Calu3 (cell line): ENCODE measurements at regions of chr2 and their contacts with region 1.

Region 1: DNA sequence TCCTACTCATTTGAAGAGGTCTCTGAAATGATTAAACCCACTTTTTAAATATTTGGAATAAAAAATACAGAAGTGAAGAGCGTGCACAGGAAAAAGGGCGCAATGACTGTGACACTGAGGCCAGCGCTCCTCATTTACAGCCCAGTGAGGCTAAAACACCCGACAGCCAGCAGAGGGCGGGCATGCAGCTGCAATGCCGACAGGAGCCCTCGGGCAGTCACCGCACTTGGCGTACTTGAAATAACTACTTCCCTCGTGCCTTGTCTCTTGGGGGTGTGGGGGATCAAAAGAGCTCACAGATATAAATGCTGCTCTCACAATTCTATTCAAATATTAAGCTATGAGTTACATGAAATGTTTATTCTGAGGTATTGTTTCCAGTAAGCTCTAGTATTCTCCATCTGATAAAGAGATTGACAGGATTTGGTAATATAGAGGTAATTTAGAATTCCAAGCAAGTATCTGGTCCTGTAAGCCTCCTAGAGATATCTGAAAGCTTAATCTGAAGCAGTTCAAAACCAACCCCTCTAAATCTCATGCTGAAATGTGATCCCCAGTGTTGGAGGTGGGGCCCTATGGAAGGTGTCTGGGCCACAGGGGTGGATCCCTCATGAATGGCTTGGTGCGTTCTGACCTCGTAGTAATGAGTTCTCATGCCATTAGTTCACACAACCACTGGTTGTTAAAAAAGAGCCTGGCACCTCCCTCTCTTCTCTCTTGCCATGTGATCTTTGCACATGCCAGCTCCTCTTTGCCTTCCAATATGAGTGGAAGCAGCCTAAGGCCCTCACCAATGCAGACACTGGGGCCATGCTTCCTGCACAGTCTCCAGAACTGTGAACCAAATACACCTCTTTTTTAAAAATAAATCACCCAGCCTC is 93.6 kb downstream of the ZAP70 start:
- DNase-seq: peak; percentile 80
- H3K4me3 Mint-ChIP-seq: no peak overlapping the region
- H3K27ac Mint-ChIP-seq: no peak overlapping the region
- H3K4me1 Mint-ChIP-seq: no peaks in the 10 kb centered on the region
- H3K27me3 Mint-ChIP-seq: no peaks in the 10 kb centered on the region
- CTCF ChIP-seq: peak; percentile 81

Region 2: GRCh38 chr2:97948926-97949325 is 141.9 kb after region 1 on chr2:
- CTCF ChIA-PET with region 1: interaction called, 3 read pairs
- intact Hi-C with region 1: loop called (anchors 5 kb)
- DNase-seq: no peak
- H3K4me3 Mint-ChIP-seq: no peak overlapping the region
- H3K27ac Mint-ChIP-seq: no peak overlapping the region
- H3K4me1 Mint-ChIP-seq: peaks cover 18% of the 10 kb centered on the region
- H3K27me3 Mint-ChIP-seq: no peaks in the 10 kb centered on the region
- CTCF ChIP-seq: no peak

Region 3: GRCh38 chr2:97992836-97993825 is 186.2 kb after region 1 on chr2:
- CTCF ChIA-PET with region 1: no interaction called
- intact Hi-C with region 1: loop called (anchors 2 kb)
- DNase-seq: no peak
- H3K4me3 Mint-ChIP-seq: peak overlapping the region; percentile 80
- H3K27ac Mint-ChIP-seq: no peak overlapping the region
- H3K4me1 Mint-ChIP-seq: peaks cover 21% of the 10 kb centered on the region
- H3K27me3 Mint-ChIP-seq: no peaks in the 10 kb centered on the region
- CTCF ChIP-seq: no peak

Region 4: GRCh38 chr2:98157557-98157956 is 350.6 kb after region 1 on chr2:
- CTCF ChIA-PET with region 1: no interaction called
- intact Hi-C with region 1: loop called (anchors 10 kb)
- DNase-seq: peak; percentile 30
- H3K4me3 Mint-ChIP-seq: no peak overlapping the region
- H3K27ac Mint-ChIP-seq: no peak overlapping the region
- H3K4me1 Mint-ChIP-seq: no peaks in the 10 kb centered on the region
- H3K27me3 Mint-ChIP-seq: peaks cover 44% of the 10 kb centered on the region
- CTCF ChIP-seq: no peak

Region 5: DNA sequence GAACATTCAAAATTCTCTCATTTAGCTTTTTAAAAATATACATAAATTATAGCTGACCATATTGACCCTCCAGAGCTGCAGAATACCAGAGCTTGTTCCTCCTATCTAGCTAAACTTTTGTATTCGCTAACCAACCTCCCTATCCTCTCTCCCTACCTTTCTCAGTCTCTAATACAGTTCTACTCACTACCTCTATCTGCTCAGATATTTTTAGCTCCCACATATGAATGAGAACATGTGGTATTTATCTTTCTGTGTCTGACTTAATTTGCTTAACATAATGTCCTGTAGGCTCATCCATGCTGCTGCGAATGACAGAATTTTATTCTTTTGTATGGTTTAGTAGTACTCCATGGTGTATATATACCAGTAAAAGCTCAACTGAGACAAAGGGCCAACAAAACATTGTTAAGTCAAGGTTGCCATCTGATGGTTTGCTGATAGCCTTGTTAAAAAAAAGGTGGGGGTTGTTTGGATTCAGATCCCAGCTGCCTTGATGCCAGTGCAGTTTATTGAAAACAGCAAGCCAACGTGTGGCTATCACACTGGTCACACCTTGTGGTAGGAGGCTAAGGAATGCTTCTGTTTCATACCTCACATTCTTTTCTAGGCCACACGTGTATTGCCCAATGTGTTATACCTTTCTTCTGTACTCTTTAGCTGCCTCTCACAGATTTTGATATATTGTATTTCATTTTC is 381.5 kb after region 1 on chr2:
- CTCF ChIA-PET with region 1: interaction called, 6 read pairs
- intact Hi-C with region 1: loop called (anchors 2 kb)
- DNase-seq: peak; percentile 39
- H3K4me3 Mint-ChIP-seq: no peak overlapping the region
- H3K27ac Mint-ChIP-seq: no peak overlapping the region
- H3K4me1 Mint-ChIP-seq: no peaks in the 10 kb centered on the region
- H3K27me3 Mint-ChIP-seq: no peaks in the 10 kb centered on the region
- CTCF ChIP-seq: no peak

Region 6: DNA sequence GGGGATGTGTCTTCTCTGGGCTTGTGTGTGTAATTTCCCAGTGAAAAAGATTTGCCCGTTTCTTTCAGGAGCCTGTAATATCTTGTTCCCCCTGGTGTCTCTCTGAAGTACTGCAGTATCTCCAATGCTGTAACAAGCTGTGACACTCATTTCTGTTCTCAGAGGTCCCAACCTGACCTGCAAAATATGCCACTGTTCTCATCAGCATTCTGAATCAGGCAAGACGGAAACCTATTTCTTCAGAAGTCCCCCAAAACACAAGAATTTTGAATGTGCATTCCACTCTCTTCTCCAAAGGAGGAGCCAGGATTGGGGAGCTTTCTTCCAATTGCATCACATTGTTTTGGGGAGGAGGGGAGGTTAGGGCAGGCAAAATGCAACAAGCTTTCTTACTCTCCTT is 462.3 kb after region 1 on chr2:
- CTCF ChIA-PET with region 1: interaction called, 3 read pairs
- intact Hi-C with region 1: loop called (anchors 2 kb)
- DNase-seq: peak; percentile 60
- H3K4me3 Mint-ChIP-seq: no peak overlapping the region
- H3K27ac Mint-ChIP-seq: peak overlapping the region; percentile 22
- H3K4me1 Mint-ChIP-seq: peaks cover 11% of the 10 kb centered on the region
- H3K27me3 Mint-ChIP-seq: peaks cover 18% of the 10 kb centered on the region
- CTCF ChIP-seq: peak; percentile 63

Region 7: GRCh38 chr2:98385050-98385699 is 578.2 kb after region 1 on chr2:
- CTCF ChIA-PET with region 1: interaction called, 8 read pairs
- intact Hi-C with region 1: loop called (anchors 2 kb)
- DNase-seq: peak; percentile 77
- H3K4me3 Mint-ChIP-seq: no peak overlapping the region
- H3K27ac Mint-ChIP-seq: no peak overlapping the region
- H3K4me1 Mint-ChIP-seq: peaks cover 6% of the 10 kb centered on the region
- H3K27me3 Mint-ChIP-seq: peaks cover 85% of the 10 kb centered on the region
- CTCF ChIP-seq: peak; percentile 88